Cardiac septum (tissue), 1 donor: ENCODE measurements at regions of chr17 and their contacts with region 1.

Region 1: DNA sequence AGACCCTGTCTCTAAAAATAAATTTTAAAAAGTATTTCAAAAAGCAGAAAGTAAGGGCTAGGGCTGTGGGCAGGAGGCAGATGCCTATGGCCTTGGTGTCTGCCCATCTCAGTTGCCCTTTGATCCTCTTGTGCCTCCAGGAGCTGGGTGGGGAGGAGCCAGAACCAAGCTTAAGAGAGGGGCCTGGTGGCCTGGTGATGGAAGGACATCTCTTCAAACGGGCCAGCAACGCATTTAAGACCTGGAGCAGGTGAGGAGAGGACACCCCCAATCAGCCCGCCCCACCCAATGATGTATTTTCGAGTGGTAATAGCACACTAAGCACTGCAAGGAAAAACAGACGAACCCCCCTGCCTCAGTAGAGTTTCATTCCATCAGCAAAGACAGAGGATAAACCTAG is 7.6 kb upstream of the KCTD11 start:
- DNase-seq: no peak

Region 2: DNA sequence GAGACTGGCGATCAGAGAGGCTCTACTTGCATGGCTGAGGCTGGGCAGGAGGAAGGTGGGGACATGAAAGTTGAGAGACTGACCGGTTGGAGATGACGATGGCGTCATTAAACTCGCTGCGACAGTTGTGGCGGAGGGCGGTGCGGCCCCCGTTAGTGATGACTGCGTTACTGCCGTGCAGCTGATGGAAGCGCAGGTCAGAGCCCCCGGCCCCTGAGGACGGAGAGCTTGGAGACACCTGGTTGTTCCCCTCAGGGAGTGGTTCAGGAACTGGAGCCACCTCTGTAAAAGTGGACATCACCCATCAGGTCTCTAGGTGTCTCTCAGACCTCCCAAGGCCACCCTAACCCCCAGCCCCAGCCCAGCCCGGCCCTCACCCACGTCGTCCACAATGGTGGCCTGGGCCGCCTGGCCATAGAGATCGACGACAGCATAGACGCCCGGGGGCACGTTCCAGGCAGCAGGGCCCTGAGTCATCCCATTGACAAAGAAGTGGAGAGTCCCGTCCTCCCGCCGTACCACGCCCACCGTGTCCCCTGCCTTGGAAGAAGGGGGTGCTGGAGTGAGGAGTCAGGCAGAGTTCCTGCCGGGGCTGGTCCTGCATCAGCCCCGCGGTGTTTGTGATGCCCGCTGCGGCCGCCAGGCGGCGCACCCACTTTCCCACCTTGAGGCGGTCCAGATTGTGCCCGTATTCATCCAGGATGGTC is 20.5 kb before region 1 on chr17:
- intact Hi-C with region 1: loop called (anchors 2 kb)
- DNase-seq: no peak

Region 3: DNA sequence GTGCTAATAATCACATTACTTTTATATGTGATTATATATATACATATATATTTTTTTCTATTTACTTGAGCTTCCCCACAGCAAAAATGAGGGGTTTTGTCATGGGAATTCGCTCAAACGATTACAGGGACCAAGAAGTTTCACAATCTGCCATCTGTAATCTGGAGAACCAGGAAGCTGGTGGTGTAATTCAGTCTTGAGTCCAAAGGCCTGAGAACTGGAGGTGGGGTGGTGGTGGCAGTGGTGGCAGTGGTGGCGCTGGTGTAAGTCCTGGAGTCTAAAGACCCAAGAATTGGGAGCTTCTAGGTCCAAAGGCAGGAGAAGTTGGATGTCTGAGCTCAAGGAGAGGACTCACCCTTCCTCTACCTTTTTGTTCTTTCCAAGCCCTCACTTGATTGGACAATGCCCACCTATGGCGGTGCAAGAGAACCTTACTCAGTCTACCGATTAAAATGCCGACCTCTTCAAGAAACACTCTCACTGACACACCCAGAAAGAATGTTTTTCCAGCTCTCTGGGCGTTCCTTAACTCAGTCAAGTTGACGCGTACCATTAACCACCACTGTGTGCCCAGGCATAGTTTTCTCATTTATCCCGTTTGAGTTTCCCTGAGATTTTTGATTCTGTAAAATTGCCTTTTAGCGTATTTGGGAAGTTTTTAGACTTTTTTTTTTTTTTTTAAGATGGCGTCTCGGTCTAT is 171.7 kb after region 1 on chr17:
- intact Hi-C with region 1: no loop called
- DNase-seq: no peak